ENCODE measurements at regions of chr2 and their contacts with region 1.

Region 1: DNA sequence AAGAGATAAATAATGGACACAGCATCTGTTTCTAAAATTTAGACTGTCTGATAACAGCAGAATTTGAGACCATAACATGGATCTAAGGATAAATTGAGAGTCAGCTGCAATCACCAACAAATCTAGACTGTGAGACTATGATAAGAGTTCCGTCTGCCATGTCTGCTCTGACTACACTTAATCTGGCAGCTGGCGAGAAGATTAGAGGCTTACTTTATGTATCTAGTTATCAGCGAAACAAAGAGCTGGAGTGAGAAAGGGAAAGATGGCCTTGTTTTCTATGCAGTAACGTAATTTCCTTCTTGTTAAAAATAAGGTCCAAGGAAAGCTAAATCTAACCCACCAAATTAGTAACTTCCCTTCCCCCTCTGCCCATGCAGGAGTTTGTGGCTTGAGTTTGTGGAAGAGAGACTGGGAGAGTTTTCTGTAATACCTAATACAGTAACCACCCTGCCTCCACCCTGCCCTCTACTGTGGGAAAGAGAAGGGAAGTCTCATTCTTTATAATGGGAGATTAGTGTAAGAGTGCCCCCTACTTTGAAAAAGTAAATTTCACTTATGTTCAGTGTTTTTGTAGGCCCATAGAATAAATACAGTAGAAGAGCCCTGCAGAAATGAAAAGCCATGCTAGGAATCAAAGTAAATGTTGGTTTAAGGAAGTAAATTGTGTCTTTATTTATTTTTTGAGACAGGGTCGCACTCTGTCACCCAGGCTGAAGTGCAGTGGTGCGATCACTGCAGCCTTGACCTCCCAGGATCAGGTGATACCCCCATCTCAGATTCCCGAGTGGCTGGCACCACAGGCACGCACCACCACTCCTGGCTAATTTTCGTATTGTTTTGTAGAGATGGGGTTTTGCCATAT is 27.5 kb downstream of the EML4 start:
- DNase-seq: peak; percentile 43 to 73 (median 60)
- ATAC-seq: peak; percentile 98
- H3K4me3 ChIP-seq: no peak overlapping the region
- H3K27ac ChIP-seq: peak overlapping the region; percentile 46; the same call in 1 of the 3 replicates
- H3K4me1 ChIP-seq: peaks cover 4 to 10% of the 10 kb centered on the region in 2 experiments; a peak in 3 of 5 replicates
- H3K27me3 ChIP-seq: no peaks in the 10 kb centered on the region
- CTCF ChIP-seq: peak; percentile 66 to 99 (median 98)
- EP300 ChIP-seq: peak; percentile 83; the same call in 1 of the 2 replicates
- POLR2A ChIP-seq: no peak
- RAD21 ChIP-seq: peak; percentile 92

Region 2: GRCh38 chr2:42238644-42239288 is 42.1 kb after region 1 on chr2:
- CTCF ChIA-PET with region 1: no interaction called
- POLR2A ChIA-PET with region 1: no interaction called
- in situ Hi-C with region 1: no loop called
- intact Hi-C with region 1: loop called (anchors 2 kb)
- DNase-seq: peak in 1 of 4 experiments; percentile 68
- ATAC-seq: peak; percentile 99
- H3K4me3 ChIP-seq: no peak overlapping the region
- H3K27ac ChIP-seq: no peak overlapping the region
- H3K4me1 ChIP-seq: peaks cover 0 to 8% of the 10 kb centered on the region in 2 experiments; a peak in 2 of 5 replicates
- H3K27me3 ChIP-seq: no peaks in the 10 kb centered on the region
- CTCF ChIP-seq: peak; percentile 60 to 72 (median 66)
- EP300 ChIP-seq: no peak
- POLR2A ChIP-seq: no peak
- RAD21 ChIP-seq: peak; percentile 81 to 87

Region 3: DNA sequence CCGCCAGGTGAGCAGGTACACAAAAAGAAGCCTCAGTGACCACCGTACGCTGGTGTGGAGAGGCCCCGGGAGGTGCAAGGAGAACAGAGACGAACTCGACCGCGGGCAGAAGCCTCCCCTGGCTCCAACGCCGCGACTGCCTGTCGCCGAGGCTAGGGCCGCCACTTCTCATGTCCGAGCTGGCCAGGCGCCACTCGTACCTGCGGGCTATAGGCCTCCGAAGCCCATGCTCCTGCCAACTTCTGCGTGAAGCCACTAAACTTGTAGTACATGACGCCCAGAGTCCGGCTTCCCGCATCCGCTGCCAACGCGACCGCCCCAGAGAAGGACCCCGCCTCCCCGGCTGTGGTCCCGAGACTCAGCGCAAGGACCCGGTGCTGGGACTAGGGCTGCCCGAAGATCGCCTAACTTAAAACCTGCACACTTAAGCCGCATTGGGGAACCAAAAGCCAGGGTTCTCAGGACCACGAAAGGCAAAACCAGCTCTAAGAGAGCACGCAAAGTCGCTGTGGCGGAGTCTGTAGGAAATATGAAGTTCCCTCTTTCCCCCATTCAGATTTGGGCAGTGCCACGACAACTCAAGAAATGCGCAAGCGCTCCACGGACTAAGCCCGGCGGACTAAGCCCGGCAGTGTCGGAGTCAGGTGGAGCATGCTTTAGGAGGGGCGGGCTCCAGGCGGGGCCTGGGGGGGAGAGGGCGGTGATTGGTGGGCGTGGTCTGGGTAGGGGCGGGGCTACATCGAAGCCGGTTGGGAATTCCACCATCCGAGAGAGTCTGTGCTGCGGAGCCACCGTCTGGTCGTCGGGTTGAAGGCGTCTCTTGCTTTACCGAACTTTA is 164.5 kb after region 1 on chr2 and contains the start of gene COX7A2L:
- CTCF ChIA-PET with region 1: no interaction called
- POLR2A ChIA-PET with region 1: no interaction called
- in situ Hi-C with region 1: no loop called
- intact Hi-C with region 1: loop called (anchors 2 kb)
- DNase-seq: peak; percentile 96 to 99 (median 98)
- ATAC-seq: peak; percentile 93
- H3K4me3 ChIP-seq: peak within 1 kb of the TSS; percentile 99
- H3K27ac ChIP-seq: peak within 1 kb of the TSS; percentile 97
- H3K4me1 ChIP-seq: peaks cover 13 to 27% of the 10 kb centered on the region in 2 experiments; a peak in 4 of 5 replicates
- H3K27me3 ChIP-seq: peaks cover 3 to 11% of the 10 kb centered on the region in 2 experiments; a peak in 4 of 5 replicates
- CTCF ChIP-seq: peak in 2 of 3 experiments; percentile 37 to 61; a peak in 4 of 6 replicates
- EP300 ChIP-seq: 0 out of 2 replicates have a peak, but pooled peaks have one; percentile 13
- POLR2A ChIP-seq: peak; percentile 86
- RAD21 ChIP-seq: peak; percentile 43 to 52; a peak in 3 of 4 replicates
- polyA plus RNA-seq, gene COX7A2L: 366 to 481 TPM

Measured in K562 (cell line).